Activated CD4-positive, alpha-beta T cell treated with anti-CD3 and anti-CD28 coated beads, Interleukin-2, amount 10 ng/mL, durations not matched to agents 7 days and 5 days (primary cell): ENCODE measurements at regions of chr20 and their contacts with region 1.

Region 1: GRCh38 chr20:46545077-46545826 is 5.2 kb downstream of the OCSTAMP start:
- DNase-seq: peak; percentile 63
- H3K4me3 Mint-ChIP-seq: peak overlapping the region; percentile 40
- H3K27ac Mint-ChIP-seq: peak overlapping the region; percentile 87
- H3K4me1 Mint-ChIP-seq: peaks cover 10% of the 10 kb centered on the region
- H3K27me3 Mint-ChIP-seq: peaks cover 7% of the 10 kb centered on the region

Region 2: DNA sequence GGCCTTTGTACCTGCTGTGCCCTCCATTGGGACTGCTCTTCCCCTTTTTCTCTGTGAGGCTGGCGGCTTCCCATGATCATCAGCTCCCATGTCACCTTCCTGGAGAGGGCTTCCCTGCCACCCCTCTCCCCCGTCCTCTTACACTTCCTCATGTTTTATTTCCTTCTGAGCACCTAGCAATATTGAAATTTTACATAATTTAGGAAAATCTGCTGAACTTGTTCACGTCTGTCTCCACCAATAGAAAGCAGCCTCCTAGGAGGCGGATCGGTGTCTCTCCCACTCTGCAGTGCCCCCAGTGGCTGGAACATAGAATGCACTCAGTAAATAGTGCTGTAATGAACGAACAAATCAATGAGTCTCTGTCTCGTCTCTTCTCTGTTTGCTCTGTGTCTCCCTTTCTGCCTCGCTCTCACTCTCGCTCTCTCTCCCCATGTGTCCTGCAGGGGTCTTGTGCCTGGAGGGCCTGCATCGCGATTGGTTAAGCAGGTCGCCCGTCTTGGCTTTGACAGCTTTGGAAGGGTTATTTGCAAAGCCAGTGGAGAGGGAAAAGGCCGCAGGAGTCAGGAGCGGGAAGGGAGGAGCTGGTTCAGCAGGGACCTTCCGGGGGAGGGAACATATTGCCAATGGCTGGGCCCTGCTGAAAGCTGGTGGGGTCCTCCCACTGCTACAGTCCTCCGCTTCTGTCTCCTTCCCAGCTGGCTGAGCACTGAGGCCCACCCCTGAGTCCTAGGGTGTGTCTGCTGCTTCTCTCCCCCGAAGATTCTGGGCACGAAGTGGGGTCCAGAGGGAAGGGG is 17.3 kb after region 1 on chr20:
- CTCF ChIA-PET with region 1: interaction called, 10 read pairs
- POLR2A ChIA-PET with region 1: no interaction called
- DNase-seq: peak; percentile 69
- H3K4me3 Mint-ChIP-seq: no peak overlapping the region
- H3K27ac Mint-ChIP-seq: no peak overlapping the region
- H3K4me1 Mint-ChIP-seq: peaks cover 22% of the 10 kb centered on the region
- H3K27me3 Mint-ChIP-seq: peaks cover 8% of the 10 kb centered on the region